Activated B cell treated with CpG ODN at 0.5 μM for 24 hours (primary cell): ENCODE measurements at regions of chr6 and their contacts with region 1.

Region 1: DNA sequence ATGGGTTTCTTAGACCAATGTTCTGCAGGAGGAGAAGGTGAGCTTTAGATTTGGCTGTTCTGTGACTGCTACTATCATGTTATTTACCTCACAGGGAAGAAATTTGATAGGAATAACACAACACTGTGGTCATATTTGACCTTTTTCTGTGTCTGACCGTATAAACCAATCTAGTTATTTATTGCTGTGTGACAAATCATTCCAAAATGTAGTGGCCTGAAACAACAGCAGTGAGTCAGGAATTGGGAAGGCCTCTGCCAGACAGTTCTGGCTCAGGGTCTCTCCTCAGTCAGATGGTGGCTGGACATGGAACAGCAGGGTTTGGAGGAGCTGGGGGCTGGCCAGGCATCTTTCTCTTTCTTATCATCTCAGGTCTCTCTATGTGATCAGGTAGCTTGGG is 33.0 kb downstream of the RIPOR2 start:
- DNase-seq: no peak
- ATAC-seq: no peak
- H3K4me3 Mint-ChIP-seq: no peak overlapping the region
- H3K27ac Mint-ChIP-seq: peak overlapping the region; percentile 81
- H3K4me1 Mint-ChIP-seq: peaks cover 96% of the 10 kb centered on the region
- H3K27me3 Mint-ChIP-seq: no peaks in the 10 kb centered on the region
- CTCF ChIP-seq: no peak

Region 2: DNA sequence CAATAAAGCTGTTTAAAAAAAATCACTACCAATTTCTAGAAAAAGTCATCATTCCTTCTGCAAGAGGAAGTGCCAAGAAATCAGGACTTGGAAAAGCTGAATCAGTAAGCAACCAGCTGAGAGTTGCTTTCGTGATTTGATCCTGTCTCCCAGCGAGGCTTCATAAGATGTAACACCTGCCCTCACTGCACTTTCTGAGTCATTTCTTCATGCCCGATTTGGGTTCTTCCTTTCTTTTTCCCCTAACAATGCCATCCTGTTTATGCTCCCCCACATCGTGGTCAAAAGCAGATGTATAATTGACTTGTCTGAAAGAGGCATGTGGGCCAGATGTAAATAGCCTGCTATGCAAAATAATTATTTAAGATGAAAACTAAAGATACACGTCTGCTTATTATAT is 19.2 kb before region 1 on chr6:
- CTCF ChIA-PET with region 1: interaction called, 4 read pairs
- POLR2A ChIA-PET with region 1: interaction called, 6 read pairs
- intact Hi-C with region 1: loop called (anchors 2 kb)
- DNase-seq: no peak
- ATAC-seq: peak; percentile 55
- H3K4me3 Mint-ChIP-seq: no peak overlapping the region
- H3K27ac Mint-ChIP-seq: peak overlapping the region; percentile 80
- H3K4me1 Mint-ChIP-seq: peaks cover 89% of the 10 kb centered on the region
- H3K27me3 Mint-ChIP-seq: no peaks in the 10 kb centered on the region
- CTCF ChIP-seq: no peak

Region 3: DNA sequence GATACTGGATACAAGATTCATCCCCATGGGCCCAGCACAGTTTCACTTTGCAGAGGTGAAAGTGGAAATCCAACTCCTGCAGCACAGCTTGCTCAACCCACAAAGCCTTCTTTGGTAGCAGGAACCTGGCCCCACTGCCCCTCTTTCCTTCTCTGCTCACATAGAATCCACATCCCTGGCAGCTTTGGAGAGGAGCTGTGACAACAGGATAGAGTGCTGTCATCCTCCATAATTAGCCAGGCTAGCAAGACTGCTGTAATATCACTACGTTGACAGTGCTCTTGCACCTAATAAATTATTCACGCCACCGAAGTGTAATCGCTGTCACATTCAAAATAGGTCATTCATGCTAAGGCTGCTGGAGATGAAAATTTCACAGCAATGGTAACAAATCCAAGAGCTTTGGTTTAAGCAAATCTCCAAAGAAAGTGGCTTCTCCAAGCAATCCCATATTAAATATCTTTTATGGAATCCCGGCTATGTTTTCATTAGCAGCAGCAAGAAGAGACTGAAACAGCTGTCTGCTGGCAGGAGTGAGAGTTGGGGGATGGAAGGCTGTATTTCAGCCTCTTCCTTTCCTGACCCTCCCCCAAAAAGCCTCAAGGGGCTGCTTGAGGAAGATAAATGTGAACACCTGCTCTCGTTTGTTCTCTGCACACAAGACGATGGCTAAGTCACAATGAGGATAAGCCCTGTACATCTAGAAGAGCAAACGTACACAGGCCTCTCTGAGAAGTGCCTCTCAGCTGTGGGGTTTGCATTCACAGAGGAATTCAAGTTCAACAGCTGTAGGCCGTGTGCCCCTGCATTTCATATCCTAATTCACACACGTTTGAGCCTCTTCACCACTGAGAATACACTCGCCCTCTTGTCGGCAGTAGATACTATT is 16.5 kb after region 1 on chr6:
- CTCF ChIA-PET with region 1: no interaction called
- POLR2A ChIA-PET with region 1: interaction called, 12 read pairs
- intact Hi-C with region 1: no loop called
- DNase-seq: no peak
- ATAC-seq: peak; percentile 55
- H3K4me3 Mint-ChIP-seq: peak overlapping the region; percentile 61
- H3K27ac Mint-ChIP-seq: peak overlapping the region; percentile 88
- H3K4me1 Mint-ChIP-seq: peaks cover 96% of the 10 kb centered on the region
- H3K27me3 Mint-ChIP-seq: no peaks in the 10 kb centered on the region
- CTCF ChIP-seq: no peak

Region 4: GRCh38 chr6:24945054-24945453 is 42.3 kb after region 1 on chr6:
- CTCF ChIA-PET with region 1: no interaction called
- POLR2A ChIA-PET with region 1: no interaction called
- intact Hi-C with region 1: no loop called
- DNase-seq: no peak
- ATAC-seq: no peak
- H3K4me3 Mint-ChIP-seq: no peak overlapping the region
- H3K27ac Mint-ChIP-seq: no peak overlapping the region
- H3K4me1 Mint-ChIP-seq: peaks cover 80% of the 10 kb centered on the region
- H3K27me3 Mint-ChIP-seq: no peaks in the 10 kb centered on the region
- CTCF ChIP-seq: no peak